ENCODE measurements at regions of chr14 and their contacts with region 1.

Region 1: GRCh38 chr14:57871459-57872080 is 5.7 kb upstream of the SLC35F4 start:
- DNase-seq: peak; percentile 26
- H3K4me3 ChIP-seq: no peak overlapping the region
- H3K27ac ChIP-seq: no peak overlapping the region
- H3K4me1 ChIP-seq: no peaks in the 10 kb centered on the region
- H3K27me3 ChIP-seq: peaks cover 2% of the 10 kb centered on the region in 2 experiments
- CTCF ChIP-seq: peak; percentile 45 to 59
- POLR2A ChIP-seq: no peak

Region 2: DNA sequence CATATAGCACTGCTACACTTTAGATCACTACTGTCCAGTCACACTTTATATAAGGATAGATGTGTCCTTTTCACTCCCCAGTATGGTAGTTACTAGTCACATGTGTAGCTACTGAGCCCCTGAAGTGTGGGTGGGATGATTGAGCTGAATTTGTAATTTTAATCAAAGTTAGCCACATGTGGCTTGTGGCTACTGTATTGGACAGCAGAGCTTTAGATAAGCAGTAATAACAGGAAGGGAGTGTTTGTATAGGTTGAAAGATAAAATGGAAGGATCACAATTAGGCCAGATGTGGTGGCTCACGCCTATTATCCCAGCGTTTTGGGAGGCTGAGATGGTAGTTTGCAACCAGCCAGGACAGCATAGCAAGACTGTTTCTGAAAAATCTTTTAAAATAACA is 457.7 kb before region 1 on chr14:
- CTCF ChIA-PET with region 1: no interaction called
- POLR2A ChIA-PET with region 1: no interaction called
- dilution Hi-C with region 1: no loop called
- intact Hi-C with region 1: no loop called
- DNase-seq: no peak
- H3K4me3 ChIP-seq: no peak overlapping the region
- H3K27ac ChIP-seq: no peak overlapping the region
- H3K4me1 ChIP-seq: peaks cover 3% of the 10 kb centered on the region
- H3K27me3 ChIP-seq: no peaks in the 10 kb centered on the region
- CTCF ChIP-seq: no peak
- POLR2A ChIP-seq: no peak

Region 3: GRCh38 chr14:57533214-57533613 is 338.4 kb before region 1 on chr14:
- CTCF ChIA-PET with region 1: no interaction called
- POLR2A ChIA-PET with region 1: no interaction called
- dilution Hi-C with region 1: no loop called
- intact Hi-C with region 1: loop called (anchors 5 kb)
- DNase-seq: no peak
- H3K4me3 ChIP-seq: no peak overlapping the region
- H3K27ac ChIP-seq: no peak overlapping the region
- H3K4me1 ChIP-seq: no peaks in the 10 kb centered on the region
- H3K27me3 ChIP-seq: no peaks in the 10 kb centered on the region
- CTCF ChIP-seq: peak in 1 of 2 donors; percentile 27
- POLR2A ChIP-seq: no peak

Region 4: GRCh38 chr14:58072288-58073071 is 200.9 kb after region 1 on chr14:
- CTCF ChIA-PET with region 1: no interaction called
- POLR2A ChIA-PET with region 1: no interaction called
- dilution Hi-C with region 1: no loop called
- intact Hi-C with region 1: loop called (anchors 1 kb)
- DNase-seq: peak; percentile 68
- H3K4me3 ChIP-seq: no peak overlapping the region
- H3K27ac ChIP-seq: no peak overlapping the region
- H3K4me1 ChIP-seq: no peaks in the 10 kb centered on the region
- H3K27me3 ChIP-seq: peaks cover 8 to 14% of the 10 kb centered on the region in 2 experiments
- CTCF ChIP-seq: peak; percentile 50 to 67
- POLR2A ChIP-seq: no peak